ENCODE measurements at regions of chr21 and their contacts with region 1.

Region 1: DNA sequence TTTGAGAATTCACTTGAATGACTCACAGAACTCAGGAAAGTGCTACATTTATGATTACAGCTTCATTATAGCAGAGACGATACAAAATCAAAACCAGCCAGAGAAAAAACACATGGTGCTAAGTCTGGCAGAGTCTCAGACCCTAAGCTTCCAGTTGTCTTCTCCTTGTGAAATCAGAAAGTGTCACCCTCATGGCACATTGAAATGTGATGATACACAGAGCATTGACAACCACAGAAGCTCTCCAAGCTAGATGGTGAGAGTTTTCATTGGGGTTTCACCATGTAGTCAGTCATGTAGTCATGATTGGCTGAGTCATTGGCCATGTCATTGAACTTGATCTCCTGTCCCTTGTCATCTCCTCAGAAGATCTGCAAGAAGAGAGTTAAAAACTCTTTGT is 526.6 kb downstream of the MRPL39 start:
- DNase-seq: no peak
- CTCF ChIP-seq: no peak

Region 2: GRCh38 chr21:25092441-25093011 is 11.9 kb after region 1 on chr21:
- CTCF ChIA-PET with region 1: interaction called, 11 read pairs
- POLR2A ChIA-PET with region 1: no interaction called
- DNase-seq: no peak
- CTCF ChIP-seq: no peak